Right cardiac atrium (tissue), 5 donors: ENCODE measurements at regions of chr1 and their contacts with region 1.

Region 1: GRCh38 chr1:96236156-96236739 is 485.3 kb upstream of the PTBP2 start:
- DNase-seq: no peak
- ATAC-seq: no peak
- H3K4me3 ChIP-seq: no peak overlapping the region
- H3K27ac ChIP-seq: no peak overlapping the region
- H3K4me1 ChIP-seq: no peaks in the 10 kb centered on the region
- H3K27me3 ChIP-seq: no peaks in the 10 kb centered on the region

Region 2: GRCh38 chr1:96145492-96145891 is 90.8 kb before region 1 on chr1:
- intact Hi-C with region 1: no loop called
- DNase-seq: no peak
- ATAC-seq: no peak
- H3K4me3 ChIP-seq: no peak overlapping the region
- H3K27ac ChIP-seq: no peak overlapping the region
- H3K4me1 ChIP-seq: no peaks in the 10 kb centered on the region
- H3K27me3 ChIP-seq: no peaks in the 10 kb centered on the region

Region 3: DNA sequence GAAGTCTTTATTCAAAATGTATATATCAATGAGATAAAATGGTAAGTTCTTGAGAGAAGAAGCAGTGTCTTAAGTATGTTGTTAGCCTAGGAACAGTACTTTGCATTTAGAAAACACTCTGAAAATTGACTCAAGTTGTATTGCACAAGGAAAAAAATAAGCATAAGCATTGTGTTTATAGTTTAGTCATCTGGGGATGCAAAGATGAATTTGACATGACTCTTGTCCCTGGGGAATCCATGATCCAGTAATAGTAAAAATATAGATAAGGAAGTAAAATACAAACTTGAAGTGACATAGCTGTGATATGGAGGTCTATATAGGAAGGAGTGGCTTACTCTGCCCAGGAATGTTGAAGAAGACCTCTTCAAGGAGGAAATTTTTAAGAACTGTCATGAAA is 300.3 kb after region 1 on chr1:
- intact Hi-C with region 1: no loop called
- DNase-seq: no peak
- ATAC-seq: no peak
- H3K4me3 ChIP-seq: no peak overlapping the region
- H3K27ac ChIP-seq: no peak overlapping the region
- H3K4me1 ChIP-seq: no peaks in the 10 kb centered on the region
- H3K27me3 ChIP-seq: no peaks in the 10 kb centered on the region

Region 4: GRCh38 chr1:96845464-96845863 is 609.2 kb after region 1 on chr1:
- intact Hi-C with region 1: loop called in 1 of 4 experiments (anchors 10 kb)
- DNase-seq: peak in 2 of 3 donors; percentile 29 to 49
- ATAC-seq: peak; percentile 57
- H3K4me3 ChIP-seq: no peak overlapping the region
- H3K27ac ChIP-seq: no peak overlapping the region
- H3K4me1 ChIP-seq: no peaks in the 10 kb centered on the region
- H3K27me3 ChIP-seq: no peaks in the 10 kb centered on the region